MCF 10A (cell line): ENCODE measurements at regions of chr18 and their contacts with region 1.

Region 1: GRCh38 chr18:77000527-77000926 is 132.1 kb downstream of the MBP start:
- DNase-seq: peak; percentile 52
- H3K4me3 Mint-ChIP-seq: no peak overlapping the region
- H3K27ac Mint-ChIP-seq: no peak overlapping the region
- H3K4me1 Mint-ChIP-seq: no peaks in the 10 kb centered on the region
- H3K27me3 Mint-ChIP-seq: peaks cover 7% of the 10 kb centered on the region
- CTCF ChIP-seq: peak; percentile 89

Region 2: GRCh38 chr18:77013811-77014521 is 13.4 kb after region 1 on chr18:
- CTCF ChIA-PET with region 1: interaction called, 36 read pairs
- POLR2A ChIA-PET with region 1: interaction called, 3 read pairs
- intact Hi-C with region 1: no loop called
- DNase-seq: no peak
- H3K4me3 Mint-ChIP-seq: no peak overlapping the region
- H3K27ac Mint-ChIP-seq: no peak overlapping the region
- H3K4me1 Mint-ChIP-seq: no peaks in the 10 kb centered on the region
- H3K27me3 Mint-ChIP-seq: no peaks in the 10 kb centered on the region
- CTCF ChIP-seq: no peak

Region 3: DNA sequence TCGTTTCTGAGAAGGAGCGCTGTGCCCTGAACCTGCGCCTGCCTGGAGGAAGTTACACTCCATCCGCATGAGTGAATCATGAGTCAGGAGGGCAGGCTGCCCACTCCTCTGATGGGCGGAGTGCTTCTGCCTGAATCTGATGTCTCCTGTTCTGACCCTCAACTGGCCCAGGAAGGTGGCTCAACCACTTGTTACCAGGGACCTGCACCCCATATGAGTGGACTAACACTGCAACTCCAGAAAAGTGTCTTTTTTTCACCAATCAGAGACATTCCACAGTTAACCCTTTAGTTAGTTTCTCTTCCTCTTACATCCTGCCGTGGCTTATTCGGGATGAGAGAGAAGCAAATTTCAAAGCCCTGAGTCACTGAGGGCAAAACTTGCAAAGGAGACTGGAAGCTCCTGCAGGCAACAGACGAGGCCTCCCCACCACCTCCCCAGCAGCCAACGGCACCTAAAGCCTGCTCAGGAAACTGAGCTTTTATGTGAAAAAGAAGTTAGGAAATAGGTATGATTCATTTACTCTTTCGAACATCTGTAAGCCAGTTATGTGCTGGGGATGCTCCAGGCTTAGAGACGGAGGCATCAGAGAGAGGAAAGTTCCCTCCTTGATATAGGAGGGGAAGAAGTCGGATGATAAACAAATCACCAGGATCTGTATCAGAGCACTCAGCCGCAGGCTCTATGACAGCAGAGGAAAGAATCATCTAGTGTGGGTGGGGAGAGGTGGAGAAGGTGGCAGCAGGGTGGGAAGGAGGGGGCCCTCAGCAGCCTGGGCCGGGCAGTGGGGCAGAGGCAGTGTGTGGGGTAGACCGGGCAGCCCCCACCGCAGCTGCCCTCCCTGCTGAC is 101.1 kb after region 1 on chr18:
- CTCF ChIA-PET with region 1: interaction called, 3 read pairs
- POLR2A ChIA-PET with region 1: interaction called, 4 read pairs
- intact Hi-C with region 1: loop called (anchors 1 kb)
- DNase-seq: peak; percentile 95
- H3K4me3 Mint-ChIP-seq: peak overlapping the region; percentile 60
- H3K27ac Mint-ChIP-seq: peak overlapping the region; percentile 89
- H3K4me1 Mint-ChIP-seq: peaks cover 20% of the 10 kb centered on the region
- H3K27me3 Mint-ChIP-seq: no peaks in the 10 kb centered on the region
- CTCF ChIP-seq: no peak

Region 4: GRCh38 chr18:77207540-77207939 is 207.0 kb after region 1 on chr18:
- CTCF ChIA-PET with region 1: interaction called, 119 read pairs
- POLR2A ChIA-PET with region 1: interaction called, 11 read pairs
- intact Hi-C with region 1: loop called (anchors 1 kb)
- DNase-seq: peak; percentile 69
- H3K4me3 Mint-ChIP-seq: no peak overlapping the region
- H3K27ac Mint-ChIP-seq: no peak overlapping the region
- H3K4me1 Mint-ChIP-seq: peaks cover 6% of the 10 kb centered on the region
- H3K27me3 Mint-ChIP-seq: no peaks in the 10 kb centered on the region
- CTCF ChIP-seq: peak; percentile 31

Region 5: DNA sequence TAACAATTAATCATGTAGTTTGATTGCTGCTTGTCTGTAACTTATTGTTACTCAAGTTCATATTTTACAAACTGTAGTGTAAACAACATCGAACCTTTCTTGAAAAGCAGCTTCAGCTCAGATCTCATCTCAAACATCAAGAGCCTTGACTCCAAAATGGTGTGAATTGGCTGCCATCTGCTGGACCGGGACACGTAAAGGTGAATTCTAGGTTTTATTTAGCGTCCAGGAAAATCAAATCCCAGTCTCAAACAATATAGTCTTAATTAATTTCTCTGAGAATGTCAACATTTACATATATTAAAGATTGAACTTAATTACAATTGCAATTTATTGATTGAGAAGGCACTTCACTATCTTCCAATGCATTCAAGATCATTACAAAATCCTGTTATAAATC is 702.2 kb after region 1 on chr18:
- CTCF ChIA-PET with region 1: interaction called, 14 read pairs
- POLR2A ChIA-PET with region 1: no interaction called
- intact Hi-C with region 1: loop called (anchors 2 kb)
- DNase-seq: peak; percentile 44
- H3K4me3 Mint-ChIP-seq: no peak overlapping the region
- H3K27ac Mint-ChIP-seq: no peak overlapping the region
- H3K4me1 Mint-ChIP-seq: no peaks in the 10 kb centered on the region
- H3K27me3 Mint-ChIP-seq: peaks cover 43% of the 10 kb centered on the region
- CTCF ChIP-seq: peak; percentile 57